Sigmoid colon (tissue), 7 donors: ENCODE measurements at regions of chr18 and their contacts with region 1.

Region 1: DNA sequence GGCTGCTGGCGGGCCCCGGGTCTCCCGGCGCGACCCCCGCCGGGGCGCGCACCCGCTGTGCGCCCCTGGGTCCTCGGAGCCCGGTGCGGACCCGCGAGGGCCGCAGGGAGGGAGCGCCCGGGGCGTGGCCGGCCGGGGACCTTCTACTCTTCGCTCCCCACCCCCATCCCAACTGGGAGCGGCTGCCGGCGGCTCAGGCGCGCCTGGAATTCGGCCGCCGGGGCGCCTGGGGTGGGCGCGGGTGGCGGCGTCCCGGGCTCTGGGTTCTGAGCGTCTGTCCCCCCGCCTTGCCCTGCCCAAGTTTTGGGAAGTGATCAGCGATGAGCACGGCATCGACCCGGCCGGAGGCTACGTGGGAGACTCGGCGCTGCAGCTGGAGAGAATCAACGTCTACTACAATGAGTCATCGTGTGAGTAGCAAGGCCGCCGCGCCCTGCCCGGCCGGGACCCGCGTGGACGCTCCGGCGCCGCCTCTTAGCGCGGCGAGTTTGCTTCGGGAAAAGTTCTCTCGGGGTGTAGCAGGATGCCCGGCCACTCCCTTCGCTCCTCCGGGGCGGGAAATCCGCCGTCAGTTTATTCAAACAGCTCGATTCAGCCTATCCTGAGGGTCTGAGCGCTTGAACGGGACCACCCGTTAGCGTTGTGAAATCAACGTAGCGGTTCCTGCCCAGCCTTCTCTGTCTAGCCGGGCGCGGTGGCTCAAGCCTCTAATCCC is 502 bp downstream of the TUBB6 start:
- DNase-seq: peak; percentile 95
- H3K4me3 ChIP-seq: peak overlapping the region; percentile 62 to 100 (median 90)
- H3K27ac ChIP-seq: peak overlapping the region; percentile 94 to 100 (median 99)
- H3K4me1 ChIP-seq: peaks cover 0 to 56% (median 53%) of the 10 kb centered on the region in 4 donors
- H3K27me3 ChIP-seq: no peaks in the 10 kb centered on the region
- CTCF ChIP-seq: no peak
- EP300 ChIP-seq: no peak
- POLR2A ChIP-seq: peak; percentile 44 to 76

Region 2: DNA sequence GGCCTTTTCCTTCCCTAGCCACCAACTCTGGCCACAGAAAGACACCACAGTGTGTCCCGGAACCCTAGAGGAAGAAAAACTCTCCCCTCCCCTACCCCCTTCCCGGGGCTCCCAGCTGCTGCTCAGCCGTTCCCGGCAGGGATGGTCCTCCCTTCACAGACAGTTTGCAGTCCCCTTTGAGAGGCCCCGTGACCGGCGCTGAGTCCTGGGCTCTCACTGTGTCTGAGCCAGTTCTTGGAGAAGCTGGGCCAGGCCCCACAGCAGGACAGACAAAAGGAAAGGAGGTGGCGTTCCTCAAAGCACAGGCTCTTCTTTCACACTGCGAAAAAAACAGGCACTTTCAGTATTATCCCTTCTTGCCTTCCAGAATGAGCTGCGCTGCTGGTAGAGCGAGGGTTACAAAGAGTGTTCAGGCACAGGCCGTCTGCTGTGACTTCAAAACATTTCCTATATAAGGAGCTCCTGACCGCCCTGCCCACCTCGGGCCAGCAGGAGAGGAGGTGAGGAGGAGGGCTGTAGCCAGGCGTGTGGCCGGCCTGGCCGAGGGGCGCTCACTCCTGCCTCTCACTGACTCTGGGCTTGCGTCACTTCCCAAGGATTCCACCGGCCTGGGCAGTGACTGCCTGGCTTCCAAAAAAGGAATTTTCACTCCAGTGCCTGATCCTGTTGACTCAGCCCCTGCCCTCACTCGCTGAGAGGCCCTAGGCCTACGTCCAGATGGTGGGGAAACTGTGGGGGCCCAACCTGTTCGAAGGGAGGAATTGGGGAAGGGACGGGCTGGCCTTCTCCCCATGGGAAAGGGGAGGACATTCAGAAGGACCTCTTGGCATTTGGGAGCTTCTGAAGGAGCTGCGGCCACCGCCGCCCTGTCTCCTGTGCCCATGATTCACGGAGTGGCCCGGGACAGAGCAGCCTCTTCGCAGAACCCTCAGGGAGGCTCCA is 29.5 kb before region 1 on chr18:
- intact Hi-C with region 1: loop called (anchors 1 kb)
- DNase-seq: peak; percentile 98
- H3K4me3 ChIP-seq: peak overlapping the region; percentile 42 to 56 (median 50)
- H3K27ac ChIP-seq: peak overlapping the region; percentile 92 to 99 (median 96)
- H3K4me1 ChIP-seq: peaks cover 0 to 58% (median 52%) of the 10 kb centered on the region in 4 donors
- H3K27me3 ChIP-seq: no peaks in the 10 kb centered on the region
- CTCF ChIP-seq: peak in 3 of 4 experiments; percentile 7 to 20 (median 17)
- EP300 ChIP-seq: peak in 3 of 4 donors; percentile 49 to 93 (median 67)
- POLR2A ChIP-seq: peak; percentile 80 to 87

Region 3: DNA sequence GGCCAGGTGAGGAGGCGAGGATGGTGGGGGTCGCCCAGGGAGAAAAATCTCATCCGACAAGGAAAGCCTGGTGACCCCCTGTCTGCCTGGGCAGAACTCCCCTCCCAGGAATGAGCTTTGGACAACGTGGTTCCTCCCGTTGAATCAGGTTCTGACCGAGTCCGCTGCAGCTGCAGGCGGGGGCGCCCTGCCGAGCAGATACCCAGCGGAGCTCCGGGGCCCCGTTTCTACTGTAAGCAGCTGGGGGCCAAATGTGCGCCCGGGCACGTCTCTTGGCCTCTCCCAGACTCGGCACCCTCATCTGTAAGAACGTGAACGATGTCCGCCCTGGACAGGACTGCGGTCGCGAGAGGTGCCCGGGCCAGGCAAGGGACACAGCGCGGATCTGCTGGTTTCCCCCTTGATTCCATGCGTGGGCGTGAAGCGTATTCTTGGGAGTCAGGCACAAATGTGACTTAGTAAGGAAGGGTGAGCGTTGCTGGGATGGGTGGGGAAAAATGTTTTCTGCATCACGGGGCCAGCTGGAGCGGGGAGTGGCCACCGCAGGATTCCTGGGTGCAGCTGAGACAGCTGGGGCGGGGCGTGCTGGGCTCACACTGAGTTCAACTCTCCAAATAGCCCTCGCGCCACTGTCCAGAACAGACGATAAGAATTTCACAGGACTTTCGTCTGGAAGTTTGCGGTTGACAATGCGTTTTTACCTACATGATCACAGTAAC is 20.7 kb before region 1 on chr18:
- intact Hi-C with region 1: loop called (anchors 1 kb)
- DNase-seq: peak; percentile 93
- H3K4me3 ChIP-seq: peak overlapping the region; percentile 39 to 58 (median 50)
- H3K27ac ChIP-seq: peak overlapping the region; percentile 75 to 94 (median 88)
- H3K4me1 ChIP-seq: peaks cover 0 to 23% (median 13%) of the 10 kb centered on the region in 4 donors
- H3K27me3 ChIP-seq: no peaks in the 10 kb centered on the region
- CTCF ChIP-seq: no peak
- EP300 ChIP-seq: no peak
- POLR2A ChIP-seq: peak in 1 of 2 donors; percentile 38